ENCODE measurements at regions of chr16 and their contacts with region 1.

Region 1: GRCh38 chr16:55701442-55702319 is 45.9 kb downstream of the SLC6A2 start:
- DNase-seq: peak; percentile 68 to 76
- H3K4me3 ChIP-seq: no peak overlapping the region
- H3K27ac ChIP-seq: no peak overlapping the region
- H3K4me1 ChIP-seq: no peaks in the 10 kb centered on the region
- H3K27me3 ChIP-seq: no peaks in the 10 kb centered on the region
- CTCF ChIP-seq: peak; percentile 17 to 77 (median 66)
- POLR2A ChIP-seq: no peak

Region 2: DNA sequence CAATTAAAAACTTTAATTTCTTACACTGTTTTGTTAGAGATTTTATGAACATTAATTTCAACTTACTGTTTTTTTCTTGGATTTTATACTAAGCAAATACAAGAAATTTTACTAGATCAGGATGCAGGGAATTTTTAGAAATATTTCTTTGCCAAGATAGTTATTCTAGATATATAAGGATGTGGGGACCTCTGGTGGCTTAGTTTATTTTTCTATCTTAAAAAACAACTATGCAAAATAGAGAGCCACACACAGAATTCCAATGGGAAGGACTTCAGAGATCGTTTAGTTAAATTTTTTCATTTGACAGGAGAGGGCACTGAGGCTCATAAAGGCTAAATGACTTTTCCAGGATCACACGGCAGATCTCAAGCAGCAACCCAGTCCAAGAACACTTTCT is 158.2 kb before region 1 on chr16:
- intact Hi-C with region 1: loop called (anchors 5 kb)
- DNase-seq: no peak
- H3K4me3 ChIP-seq: no peak overlapping the region
- H3K27ac ChIP-seq: no peak overlapping the region
- H3K4me1 ChIP-seq: no peaks in the 10 kb centered on the region
- H3K27me3 ChIP-seq: no peaks in the 10 kb centered on the region
- CTCF ChIP-seq: peak in 5 of 6 experiments; percentile 16 to 59 (median 45)
- POLR2A ChIP-seq: no peak